ENCODE measurements at regions of chr5 and their contacts with region 1.

Region 1: DNA sequence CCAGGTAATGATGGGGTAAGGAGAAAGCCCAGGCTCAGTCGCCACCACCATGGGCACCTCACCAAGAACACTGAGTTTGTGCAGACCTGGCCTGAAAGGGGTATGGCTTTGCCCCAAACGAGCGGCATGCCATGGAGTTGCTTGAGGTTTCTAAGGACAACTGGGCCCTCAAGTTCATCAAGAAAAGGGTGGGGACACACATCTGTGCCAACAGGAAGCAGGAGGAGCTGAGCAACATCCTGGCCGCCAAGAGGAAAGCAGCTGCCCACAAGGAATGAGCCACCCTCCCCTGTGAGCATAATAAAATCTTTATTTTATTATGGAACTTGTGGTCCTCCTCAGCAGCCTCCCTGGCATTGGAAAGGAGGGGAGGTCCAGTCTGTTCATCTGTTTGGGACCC is 23.8 kb downstream of the CD14 start:
- H3K4me3 Mint-ChIP-seq: peak overlapping the region; percentile 50
- H3K27ac Mint-ChIP-seq: peak overlapping the region; percentile 98
- H3K4me1 Mint-ChIP-seq: peaks cover 64% of the 10 kb centered on the region
- H3K27me3 Mint-ChIP-seq: no peaks in the 10 kb centered on the region

Region 2: DNA sequence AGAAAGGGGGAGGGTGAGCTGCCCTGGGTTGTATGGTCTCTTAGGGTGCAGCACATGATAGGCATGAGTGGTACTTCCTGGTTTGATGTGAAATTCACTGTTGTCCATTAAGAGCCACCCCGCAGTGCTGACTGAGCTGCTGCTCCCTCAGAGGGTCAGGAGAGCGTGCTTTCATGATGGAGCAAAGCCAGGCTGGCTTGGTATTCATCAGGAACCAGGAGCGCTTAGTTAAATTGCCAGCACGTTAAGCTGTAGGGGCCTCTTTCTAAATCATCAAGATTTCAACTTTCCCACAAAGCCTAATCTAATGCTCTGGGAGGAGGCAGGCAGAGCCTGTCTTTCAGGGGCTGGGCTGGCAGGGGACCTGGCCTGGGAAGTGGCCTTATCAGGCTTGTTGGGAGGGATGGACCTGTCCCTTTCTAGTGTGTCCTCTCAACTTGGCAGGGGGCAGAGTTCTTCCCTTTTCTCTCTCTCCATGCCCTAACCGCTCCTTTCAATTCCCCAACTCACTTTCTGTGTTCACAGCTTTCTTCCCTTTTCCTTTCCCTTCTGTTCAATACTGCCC is 426.2 kb before region 1 on chr5:
- intact Hi-C with region 1: no loop called
- H3K4me3 Mint-ChIP-seq: no peak overlapping the region
- H3K27ac Mint-ChIP-seq: peak overlapping the region; percentile 62
- H3K4me1 Mint-ChIP-seq: peaks cover 44% of the 10 kb centered on the region
- H3K27me3 Mint-ChIP-seq: no peaks in the 10 kb centered on the region

Region 3: GRCh38 chr5:140575309-140575708 is 33.8 kb before region 1 on chr5:
- intact Hi-C with region 1: loop called (anchors 5 kb)
- H3K4me3 Mint-ChIP-seq: no peak overlapping the region
- H3K27ac Mint-ChIP-seq: peak overlapping the region; percentile 63
- H3K4me1 Mint-ChIP-seq: peaks cover 38% of the 10 kb centered on the region
- H3K27me3 Mint-ChIP-seq: no peaks in the 10 kb centered on the region

Region 4: GRCh38 chr5:140595538-140596300 is 13.4 kb before region 1 on chr5:
- intact Hi-C with region 1: loop called (anchors 2 kb)
- H3K4me3 Mint-ChIP-seq: peak overlapping the region; percentile 13
- H3K27ac Mint-ChIP-seq: peak overlapping the region; percentile 94
- H3K4me1 Mint-ChIP-seq: peaks cover 54% of the 10 kb centered on the region
- H3K27me3 Mint-ChIP-seq: no peaks in the 10 kb centered on the region

Region 5: GRCh38 chr5:140632150-140633020 is 23.3 kb after region 1 on chr5:
- intact Hi-C with region 1: loop called (anchors 1 kb)
- H3K4me3 Mint-ChIP-seq: peak overlapping the region; percentile 77
- H3K27ac Mint-ChIP-seq: peak overlapping the region; percentile 84
- H3K4me1 Mint-ChIP-seq: peaks cover 43% of the 10 kb centered on the region
- H3K27me3 Mint-ChIP-seq: no peaks in the 10 kb centered on the region